Heart right ventricle (tissue), 16 donors: ENCODE measurements at regions of chr1 and their contacts with region 1.

Region 1: GRCh38 chr1:226424228-226425003 is 16.5 kb upstream of the PARP1 start:
- DNase-seq: no peak
- ATAC-seq: peak; percentile 54 to 87 (median 77)
- H3K4me3 ChIP-seq: no peak overlapping the region
- H3K27ac ChIP-seq: no peak overlapping the region
- H3K4me1 ChIP-seq: peaks cover 0 to 9% (median 3%) of the 10 kb centered on the region in 9 donors
- H3K27me3 ChIP-seq: peaks cover 0 to 6% (median 0%) of the 10 kb centered on the region in 7 donors
- CTCF ChIP-seq: peak; percentile 37 to 69 (median 59)

Region 2: DNA sequence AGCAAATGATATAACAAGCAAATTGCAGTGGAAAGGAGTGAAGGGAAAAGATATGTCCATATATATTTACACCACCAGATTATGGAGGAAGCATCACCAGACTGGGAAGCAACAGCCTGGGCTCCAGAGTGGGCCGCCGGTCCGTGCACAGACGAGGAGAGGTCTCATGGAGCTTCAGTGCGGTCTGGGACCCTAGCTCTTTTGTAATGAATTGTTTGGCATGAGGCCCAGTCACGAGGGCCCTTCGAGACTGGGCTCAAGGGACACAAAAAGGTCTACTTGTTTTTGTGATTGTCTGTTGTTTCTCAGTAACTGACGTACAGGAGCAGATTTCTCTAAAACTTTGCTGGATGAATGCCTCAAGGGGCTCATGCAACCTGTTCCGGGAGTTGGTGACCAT is 111.2 kb after region 1 on chr1:
- intact Hi-C with region 1: loop called in 5 of 10 experiments (anchors 5 to 10 kb)
- DNase-seq: no peak
- ATAC-seq: no peak
- H3K4me3 ChIP-seq: no peak overlapping the region
- H3K27ac ChIP-seq: no peak overlapping the region
- H3K4me1 ChIP-seq: no peaks in the 10 kb centered on the region
- H3K27me3 ChIP-seq: no peaks in the 10 kb centered on the region
- CTCF ChIP-seq: no peak

Region 3: DNA sequence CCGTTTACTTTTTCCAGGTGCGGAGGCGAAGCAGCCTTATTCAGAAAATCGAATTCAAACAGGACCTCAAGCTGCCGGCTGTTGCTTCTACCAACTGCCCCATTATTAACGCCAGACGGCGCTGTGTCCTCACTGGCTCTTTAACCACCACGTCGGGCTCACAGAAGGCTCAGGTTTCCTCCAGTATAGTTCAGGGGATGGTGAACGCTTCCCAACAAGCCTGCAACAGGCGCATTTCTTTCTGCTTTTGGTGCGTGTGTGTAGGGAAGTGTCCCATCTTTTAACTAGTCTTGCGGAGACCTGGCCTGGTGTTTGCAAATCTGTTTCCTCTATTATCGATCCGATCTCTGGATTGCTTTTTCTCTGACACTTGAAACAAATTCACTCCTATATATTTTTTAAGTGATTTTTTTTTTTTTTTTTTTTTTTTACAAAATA is 123.4 kb after region 1 on chr1:
- intact Hi-C with region 1: loop called in 4 of 10 experiments (anchors 10 kb)
- DNase-seq: peak; percentile 75 to 82
- ATAC-seq: peak; percentile 69 to 83 (median 77)
- H3K4me3 ChIP-seq: peak overlapping the region in 9 of 10 donors; percentile 5 to 62 (median 55)
- H3K27ac ChIP-seq: peak overlapping the region in 1 of 10 donors; percentile 5
- H3K4me1 ChIP-seq: peaks cover 12 to 85% (median 40%) of the 10 kb centered on the region in 9 donors
- H3K27me3 ChIP-seq: peaks cover 0 to 45% (median 14%) of the 10 kb centered on the region in 7 donors
- CTCF ChIP-seq: peak; percentile 64 to 95 (median 85)

Region 4: DNA sequence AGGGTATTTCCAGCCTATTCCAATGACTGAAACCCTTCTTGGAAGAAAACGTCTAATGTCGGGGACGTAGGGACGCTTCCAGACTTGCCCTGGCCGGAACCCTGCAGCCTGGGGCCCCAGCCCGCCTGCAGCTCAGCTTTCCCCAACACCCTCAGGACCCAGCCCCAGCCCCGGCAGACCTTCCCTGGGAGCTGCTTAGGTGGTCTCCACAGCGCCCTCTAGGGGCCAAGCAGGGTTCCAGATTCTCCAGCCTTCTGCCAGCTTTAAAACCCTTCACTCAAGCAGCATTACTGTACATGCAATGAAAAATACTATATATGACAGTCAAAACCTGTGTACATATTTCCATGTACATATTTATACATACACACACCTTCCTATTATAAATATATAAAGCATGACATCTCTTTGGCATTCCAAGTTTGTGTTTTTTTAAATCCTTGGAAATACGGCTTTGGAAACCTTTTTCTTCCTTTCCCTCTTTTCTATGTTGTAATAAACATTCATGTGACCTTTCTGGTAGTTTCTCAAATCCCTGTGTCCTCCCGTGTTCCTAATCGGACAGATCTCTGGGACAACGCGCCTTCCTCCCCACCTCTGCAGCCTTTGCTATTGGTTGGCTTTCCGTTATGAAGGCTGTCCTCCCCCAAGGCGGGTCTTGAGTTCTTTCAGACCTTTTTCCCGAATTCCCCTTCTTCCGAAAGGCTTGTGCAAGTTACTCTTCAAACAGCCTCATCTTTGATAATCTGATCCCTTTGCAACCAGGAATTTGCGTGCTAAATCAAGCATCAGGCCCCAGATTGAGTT is 184.5 kb after region 1 on chr1:
- intact Hi-C with region 1: loop called in 9 of 10 experiments (anchors 5 to 10 kb)
- DNase-seq: peak; percentile 53 to 67
- ATAC-seq: peak in 5 of 8 donors; percentile 35 to 66 (median 62)
- H3K4me3 ChIP-seq: no peak overlapping the region
- H3K27ac ChIP-seq: no peak overlapping the region
- H3K4me1 ChIP-seq: peaks cover 7 to 49% (median 21%) of the 10 kb centered on the region in 9 donors
- H3K27me3 ChIP-seq: no peaks in the 10 kb centered on the region
- CTCF ChIP-seq: peak; percentile 76 to 89 (median 83)

Region 5: DNA sequence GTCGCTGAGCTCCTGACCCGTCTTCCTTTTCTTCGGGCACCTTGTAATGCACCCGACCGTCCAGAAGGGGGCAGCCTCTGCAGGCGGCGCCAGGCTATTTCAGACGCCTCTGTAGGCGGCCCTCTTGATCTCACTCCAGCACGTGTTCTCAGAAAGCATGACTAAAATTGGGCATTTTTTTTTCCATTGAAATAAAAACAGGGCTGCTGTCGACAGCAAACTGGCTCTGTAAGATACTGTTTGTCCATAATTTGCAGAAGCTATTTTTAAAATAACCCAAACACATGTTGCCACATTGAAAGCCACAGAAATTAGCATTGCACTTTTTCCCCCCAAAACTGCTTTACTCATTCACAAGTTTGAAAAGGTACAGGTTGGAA is 202.2 kb after region 1 on chr1:
- intact Hi-C with region 1: loop called in 1 of 10 experiments (anchors 10 kb)
- DNase-seq: peak; percentile 76 to 79
- ATAC-seq: peak; percentile 70 to 90 (median 86)
- H3K4me3 ChIP-seq: peak overlapping the region in 2 of 10 donors; percentile 7 to 14
- H3K27ac ChIP-seq: no peak overlapping the region
- H3K4me1 ChIP-seq: peaks cover 0 to 12% (median 0%) of the 10 kb centered on the region in 9 donors
- H3K27me3 ChIP-seq: no peaks in the 10 kb centered on the region
- CTCF ChIP-seq: peak; percentile 95 to 99 (median 97)